ENCODE measurements at regions of chr12 and their contacts with region 1.

Region 1: GRCh38 chr12:15515010-15515409 is 192.7 kb downstream of the PTPRO start:
- DNase-seq: no peak
- ATAC-seq: no peak
- H3K4me3 Mint-ChIP-seq: no peak overlapping the region
- H3K27ac Mint-ChIP-seq: no peak overlapping the region
- H3K4me1 Mint-ChIP-seq: no peaks in the 10 kb centered on the region
- H3K27me3 Mint-ChIP-seq: peaks cover 10% of the 10 kb centered on the region
- CTCF ChIP-seq: no peak

Region 2: GRCh38 chr12:15165012-15165659 is 349.9 kb before region 1 on chr12:
- CTCF ChIA-PET with region 1: no interaction called
- POLR2A ChIA-PET with region 1: no interaction called
- intact Hi-C with region 1: loop called (anchors 10 kb)
- DNase-seq: no peak
- ATAC-seq: no peak
- H3K4me3 Mint-ChIP-seq: no peak overlapping the region
- H3K27ac Mint-ChIP-seq: no peak overlapping the region
- H3K4me1 Mint-ChIP-seq: no peaks in the 10 kb centered on the region
- H3K27me3 Mint-ChIP-seq: peaks cover 8% of the 10 kb centered on the region
- CTCF ChIP-seq: no peak

Region 3: GRCh38 chr12:15372352-15372751 is 142.7 kb before region 1 on chr12:
- CTCF ChIA-PET with region 1: no interaction called
- POLR2A ChIA-PET with region 1: no interaction called
- intact Hi-C with region 1: loop called (anchors 5 kb)
- DNase-seq: no peak
- ATAC-seq: no peak
- H3K4me3 Mint-ChIP-seq: no peak overlapping the region
- H3K27ac Mint-ChIP-seq: no peak overlapping the region
- H3K4me1 Mint-ChIP-seq: no peaks in the 10 kb centered on the region
- H3K27me3 Mint-ChIP-seq: peaks cover 6% of the 10 kb centered on the region
- CTCF ChIP-seq: no peak

Region 4: GRCh38 chr12:15497671-15498292 is 17.2 kb before region 1 on chr12:
- CTCF ChIA-PET with region 1: no interaction called
- POLR2A ChIA-PET with region 1: no interaction called
- intact Hi-C with region 1: no loop called
- DNase-seq: no peak
- ATAC-seq: no peak
- H3K4me3 Mint-ChIP-seq: no peak overlapping the region
- H3K27ac Mint-ChIP-seq: no peak overlapping the region
- H3K4me1 Mint-ChIP-seq: no peaks in the 10 kb centered on the region
- H3K27me3 Mint-ChIP-seq: peaks cover 9% of the 10 kb centered on the region
- CTCF ChIP-seq: no peak

Region 5: DNA sequence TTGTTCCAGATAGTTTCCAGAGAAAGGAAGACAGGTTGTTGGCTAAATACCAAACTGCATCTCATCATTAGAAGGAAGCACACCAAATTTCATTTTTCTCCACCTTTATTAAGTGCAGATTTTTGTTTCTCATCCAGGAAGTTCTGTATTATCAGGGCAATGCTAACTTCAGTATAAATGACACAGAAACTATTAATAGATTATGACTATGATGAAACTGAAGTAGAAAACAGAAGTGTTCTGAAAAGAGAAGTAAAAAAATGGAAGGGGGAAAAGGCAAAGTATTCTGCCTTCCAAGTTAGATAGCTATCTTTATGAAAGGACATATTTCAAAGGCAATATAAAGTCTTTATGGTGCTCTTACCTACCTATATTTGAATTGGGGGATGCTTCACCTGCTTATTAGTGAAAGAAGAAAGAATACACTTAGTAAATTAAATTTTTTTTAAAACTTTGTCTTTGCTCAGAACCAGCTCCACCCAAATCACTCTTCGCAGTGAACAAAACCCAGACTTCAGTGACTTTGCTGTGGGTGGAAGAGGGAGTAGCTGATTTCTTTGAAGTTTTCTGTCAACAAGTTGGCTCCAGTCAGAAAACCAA is 31.2 kb after region 1 on chr12:
- CTCF ChIA-PET with region 1: no interaction called
- POLR2A ChIA-PET with region 1: no interaction called
- intact Hi-C with region 1: no loop called
- DNase-seq: peak; percentile 17
- ATAC-seq: peak; percentile 62
- H3K4me3 Mint-ChIP-seq: peak overlapping the region; percentile 20
- H3K27ac Mint-ChIP-seq: peak overlapping the region; percentile 86
- H3K4me1 Mint-ChIP-seq: peaks cover 35% of the 10 kb centered on the region
- H3K27me3 Mint-ChIP-seq: no peaks in the 10 kb centered on the region
- CTCF ChIP-seq: no peak

Region 6: DNA sequence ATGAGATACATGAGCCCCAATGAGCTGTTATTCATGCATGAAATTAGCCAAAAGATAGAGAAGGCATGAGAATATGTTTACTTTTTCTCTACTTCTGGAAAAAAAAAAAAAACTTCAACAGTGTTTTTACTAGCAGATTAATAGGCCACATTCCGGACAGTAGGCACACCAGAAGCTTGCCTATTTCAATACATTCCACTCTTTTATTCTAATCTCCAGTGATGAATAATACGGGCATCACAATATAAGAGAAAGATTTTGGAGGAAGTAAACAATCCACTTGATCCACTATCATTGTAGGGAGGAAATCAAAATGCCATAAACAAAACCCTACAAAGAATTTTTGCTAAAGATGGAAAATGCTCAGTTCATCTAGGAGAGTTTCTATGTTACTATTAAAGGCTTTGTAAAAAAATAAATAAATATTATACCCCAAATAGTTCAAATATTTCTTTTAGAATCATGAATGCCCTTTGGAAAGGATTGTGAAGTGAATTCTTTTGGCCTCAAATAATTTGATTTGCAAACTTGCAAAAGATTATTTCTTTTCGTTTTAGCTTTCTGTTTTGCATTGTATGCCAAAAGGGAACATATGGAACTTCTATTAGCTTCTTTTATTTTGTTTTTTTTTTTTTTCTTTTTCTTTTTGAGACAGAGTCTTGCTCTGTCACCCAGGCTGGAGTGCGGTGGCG is 41.5 kb after region 1 on chr12:
- CTCF ChIA-PET with region 1: no interaction called
- POLR2A ChIA-PET with region 1: no interaction called
- intact Hi-C with region 1: no loop called
- DNase-seq: no peak
- ATAC-seq: no peak
- H3K4me3 Mint-ChIP-seq: no peak overlapping the region
- H3K27ac Mint-ChIP-seq: no peak overlapping the region
- H3K4me1 Mint-ChIP-seq: peaks cover 24% of the 10 kb centered on the region
- H3K27me3 Mint-ChIP-seq: no peaks in the 10 kb centered on the region
- CTCF ChIP-seq: no peak

Region 7: GRCh38 chr12:15757553-15758265 is 242.7 kb after region 1 on chr12:
- CTCF ChIA-PET with region 1: no interaction called
- POLR2A ChIA-PET with region 1: no interaction called
- intact Hi-C with region 1: no loop called
- DNase-seq: peak; percentile 4
- ATAC-seq: peak; percentile 67
- H3K4me3 Mint-ChIP-seq: no peak overlapping the region
- H3K27ac Mint-ChIP-seq: no peak overlapping the region
- H3K4me1 Mint-ChIP-seq: no peaks in the 10 kb centered on the region
- H3K27me3 Mint-ChIP-seq: peaks cover 18% of the 10 kb centered on the region
- CTCF ChIP-seq: no peak